Activated T-helper 1 cell treated with anti-CD3 and anti-CD28 coated beads, Interleukin-12 subunit alpha, Interleukin-12 subunit beta, Interleukin-2, Interleukin-4 antibody, amounts not matched to agents 30 ng/mL and 10 ng/mL and 1 ng/mL, durations not matched to agents 14 hours and 24 hours and 36 hours (primary cell): ENCODE measurements at regions of chr7 and their contacts with region 1.

Region 1: GRCh38 chr7:104267701-104268368 is 60.0 kb upstream of the ORC5 start:
- DNase-seq: no peak
- H3K4me3 Mint-ChIP-seq: no peak overlapping the region
- H3K27ac Mint-ChIP-seq: no peak overlapping the region
- H3K4me1 Mint-ChIP-seq: no peaks in the 10 kb centered on the region
- H3K27me3 Mint-ChIP-seq: peaks cover 3% of the 10 kb centered on the region

Region 2: GRCh38 chr7:103573479-103574058 is 694.3 kb before region 1 on chr7:
- intact Hi-C with region 1: loop called (anchors 5 kb)
- DNase-seq: no peak
- H3K4me3 Mint-ChIP-seq: no peak overlapping the region
- H3K27ac Mint-ChIP-seq: no peak overlapping the region
- H3K4me1 Mint-ChIP-seq: no peaks in the 10 kb centered on the region
- H3K27me3 Mint-ChIP-seq: peaks cover 2% of the 10 kb centered on the region

Region 3: DNA sequence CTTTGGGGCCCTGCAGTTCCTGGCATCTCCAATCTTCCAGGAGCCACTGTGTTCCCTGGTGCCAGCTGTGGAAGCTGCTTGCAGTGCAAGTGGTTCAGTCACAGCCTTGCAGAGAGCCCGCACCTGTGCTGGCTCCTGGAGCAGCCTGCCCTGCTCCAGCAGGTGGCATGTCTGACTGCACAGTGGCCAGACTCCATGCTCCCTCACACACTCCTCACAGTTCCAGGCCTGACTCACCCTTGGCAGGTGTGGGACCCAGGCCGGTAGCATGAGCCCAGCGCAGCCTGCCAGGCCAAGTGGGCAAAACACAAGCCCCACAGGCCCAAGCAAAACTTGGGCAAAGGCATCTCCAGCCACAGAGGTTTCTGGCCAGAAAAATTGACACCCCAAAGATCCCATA is 244.7 kb before region 1 on chr7:
- intact Hi-C with region 1: no loop called
- DNase-seq: no peak
- H3K4me3 Mint-ChIP-seq: no peak overlapping the region
- H3K27ac Mint-ChIP-seq: no peak overlapping the region
- H3K4me1 Mint-ChIP-seq: no peaks in the 10 kb centered on the region
- H3K27me3 Mint-ChIP-seq: no peaks in the 10 kb centered on the region

Region 4: DNA sequence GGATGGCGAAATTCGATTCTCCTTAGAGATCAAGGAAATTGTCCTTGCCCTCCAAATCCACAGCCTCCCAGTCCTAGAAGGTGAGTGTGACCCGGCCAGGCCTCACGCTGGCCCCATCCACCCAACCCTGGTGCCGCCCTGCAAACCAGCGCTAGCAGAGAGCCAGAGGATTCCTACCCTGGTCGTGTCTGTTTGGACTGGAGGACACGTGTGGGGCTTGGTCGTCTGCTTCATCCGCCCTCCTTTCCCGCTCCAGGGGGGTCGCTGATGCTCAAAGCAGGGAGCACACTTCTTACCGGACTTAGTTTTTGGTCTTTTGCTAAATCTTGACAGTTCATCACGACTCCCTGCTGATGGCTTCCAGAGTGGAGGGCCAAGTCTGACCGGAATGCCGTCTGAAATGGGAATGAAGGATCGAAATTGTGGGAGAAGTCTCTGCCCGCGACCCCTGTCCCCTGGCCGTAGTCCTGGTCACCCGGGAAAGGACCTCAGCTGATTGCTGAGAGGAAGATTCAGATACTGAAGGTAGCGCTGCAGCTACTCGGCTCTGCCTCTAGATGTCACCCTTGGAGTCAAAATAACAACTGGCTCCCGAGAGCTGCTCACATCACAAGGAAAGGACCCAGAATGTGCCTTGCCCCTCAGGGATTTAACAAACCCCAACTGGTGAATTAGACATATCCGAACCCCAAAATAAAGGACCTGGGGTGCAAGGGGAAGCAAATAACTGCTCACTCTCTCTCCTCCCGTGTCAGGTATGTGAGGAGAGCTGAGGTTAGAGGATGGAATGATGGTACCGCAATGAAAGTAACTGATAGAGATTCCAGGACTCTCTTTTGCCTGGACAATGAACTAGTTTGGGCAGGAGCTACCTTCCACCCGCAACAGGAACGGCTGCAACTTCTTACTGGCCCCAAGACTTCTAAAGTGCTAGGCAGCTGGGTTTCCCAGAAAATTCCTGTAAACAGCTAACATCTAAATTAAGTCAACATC is 36.5 kb before region 1 on chr7:
- intact Hi-C with region 1: loop called (anchors 2 kb)
- DNase-seq: peak; percentile 26
- H3K4me3 Mint-ChIP-seq: no peak overlapping the region
- H3K27ac Mint-ChIP-seq: no peak overlapping the region
- H3K4me1 Mint-ChIP-seq: peaks cover 5% of the 10 kb centered on the region
- H3K27me3 Mint-ChIP-seq: peaks cover 24% of the 10 kb centered on the region

Region 5: GRCh38 chr7:104914421-104914820 is 646.6 kb after region 1 on chr7:
- intact Hi-C with region 1: loop called (anchors 2 kb)
- DNase-seq: no peak
- H3K4me3 Mint-ChIP-seq: no peak overlapping the region
- H3K27ac Mint-ChIP-seq: no peak overlapping the region
- H3K4me1 Mint-ChIP-seq: no peaks in the 10 kb centered on the region
- H3K27me3 Mint-ChIP-seq: peaks cover 19% of the 10 kb centered on the region